Gastrocnemius medialis (tissue), 4 donors: ENCODE measurements at regions of chr9 and their contacts with region 1.

Region 1: DNA sequence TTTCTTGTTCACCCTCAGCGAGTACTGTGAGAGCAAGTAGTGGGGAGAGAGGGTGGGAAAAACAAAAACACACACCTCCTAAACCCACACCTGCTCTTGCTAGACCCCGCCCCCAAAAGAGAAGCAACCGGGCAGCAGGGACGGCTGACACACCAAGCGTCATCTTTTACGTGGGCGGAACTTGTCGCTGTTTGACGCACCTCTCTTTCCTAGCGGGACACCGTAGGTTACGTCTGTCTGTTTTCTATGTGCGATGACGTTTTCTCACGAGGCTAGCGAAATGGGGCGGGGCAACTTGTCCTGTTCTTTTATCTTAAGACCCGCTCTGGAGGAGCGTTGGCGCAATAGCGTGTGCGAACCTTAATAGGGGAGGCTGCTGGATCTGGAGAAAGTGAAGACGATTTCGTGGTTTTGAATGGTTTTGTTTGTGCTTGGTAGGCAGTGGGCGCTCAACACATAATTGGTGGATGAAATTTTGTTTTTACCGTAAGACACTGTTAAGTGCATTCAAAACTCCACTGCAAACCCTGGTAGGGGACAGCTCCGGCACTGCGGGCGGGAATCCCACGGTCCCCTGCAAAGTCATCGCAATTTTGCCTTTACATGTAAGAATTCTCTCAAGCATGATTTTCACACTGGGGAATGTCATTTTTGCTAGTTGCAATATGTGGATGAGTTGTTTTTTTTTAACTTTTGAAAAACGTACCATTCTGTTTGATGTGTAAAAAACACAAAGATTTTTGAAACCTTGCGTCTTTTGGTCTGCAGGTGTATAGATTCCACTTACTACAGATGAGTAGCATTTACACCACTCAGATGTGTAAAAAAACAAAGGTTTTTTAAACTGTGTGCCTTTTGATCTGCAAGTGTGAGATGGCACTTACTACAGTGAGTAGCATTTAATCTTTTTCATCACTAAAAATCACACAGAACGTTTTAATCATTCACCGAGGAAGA is 631 bp upstream of the C9orf72 start:
- DNase-seq: peak; percentile 98
- ATAC-seq: peak; percentile 91
- H3K4me3 ChIP-seq: peak overlapping the region; percentile 84 to 99 (median 92)
- H3K27ac ChIP-seq: peak overlapping the region; percentile 95 to 100 (median 100)
- H3K4me1 ChIP-seq: peaks cover 17 to 19% of the 10 kb centered on the region in 2 donors
- H3K27me3 ChIP-seq: no peaks in the 10 kb centered on the region
- CTCF ChIP-seq: no peak
- POLR2A ChIP-seq: peak; percentile 79 to 84

Region 2: GRCh38 chr9:26946753-26947727 is 626.9 kb before region 1 on chr9 and contains the start of gene PLAA:
- in situ Hi-C with region 1: loop called in 3 of 4 experiments (anchors 10 to 25 kb)
- intact Hi-C with region 1: loop called (anchors 10 kb)
- DNase-seq: peak; percentile 82 to 86
- ATAC-seq: peak; percentile 98 to 99
- H3K4me3 ChIP-seq: peak within 1 kb of the TSS; percentile 83 to 98 (median 95)
- H3K27ac ChIP-seq: peak within 1 kb of the TSS; percentile 86 to 99 (median 98)
- H3K4me1 ChIP-seq: peaks cover 36 to 38% of the 10 kb centered on the region in 2 donors
- H3K27me3 ChIP-seq: no peaks in the 10 kb centered on the region
- CTCF ChIP-seq: peak in 3 of 5 experiments; percentile 2 to 46 (median 41)
- POLR2A ChIP-seq: peak; percentile 65 to 79
- total RNA-seq, gene PLAA: 72.5 to 105 (median 83.8) TPM

Region 3: GRCh38 chr9:27033823-27034403 is 540.0 kb before region 1 on chr9:
- in situ Hi-C with region 1: loop called in 2 of 4 experiments (anchors 25 kb)
- intact Hi-C with region 1: no loop called
- DNase-seq: peak; percentile 4 to 23
- ATAC-seq: peak; percentile 74 to 86
- H3K4me3 ChIP-seq: no peak overlapping the region
- H3K27ac ChIP-seq: no peak overlapping the region
- H3K4me1 ChIP-seq: no peaks in the 10 kb centered on the region
- H3K27me3 ChIP-seq: no peaks in the 10 kb centered on the region
- CTCF ChIP-seq: peak; percentile 49 to 83 (median 72)
- POLR2A ChIP-seq: no peak

Region 4: DNA sequence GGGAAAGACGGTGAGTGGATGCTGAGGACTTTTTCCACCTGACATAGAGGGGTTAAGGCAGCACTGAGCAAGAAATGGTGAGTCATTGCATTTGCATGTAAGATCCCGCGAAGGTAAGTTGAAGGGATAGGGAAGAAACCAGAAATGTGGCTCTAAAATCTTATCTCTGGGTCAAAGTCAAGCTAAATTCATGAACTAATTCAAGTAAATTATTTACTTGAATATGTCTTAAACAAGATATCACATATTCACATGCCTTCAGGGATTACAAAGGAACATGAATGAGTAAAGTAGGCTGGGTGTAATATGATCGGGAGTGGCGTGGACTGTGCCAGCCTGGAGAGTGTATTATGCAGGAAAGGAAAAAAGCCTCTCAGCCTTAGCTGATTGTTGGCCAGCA is 202.5 kb before region 1 on chr9:
- in situ Hi-C with region 1: no loop called
- intact Hi-C with region 1: loop called (anchors 5 kb)
- DNase-seq: peak in 1 of 2 donors; percentile 59
- ATAC-seq: peak; percentile 79 to 84
- H3K4me3 ChIP-seq: peak overlapping the region in 1 of 4 donors; percentile 18
- H3K27ac ChIP-seq: peak overlapping the region in 3 of 4 donors; percentile 8 to 43 (median 30)
- H3K4me1 ChIP-seq: peaks cover 51 to 55% of the 10 kb centered on the region in 2 donors
- H3K27me3 ChIP-seq: no peaks in the 10 kb centered on the region
- CTCF ChIP-seq: no peak
- POLR2A ChIP-seq: no peak

Region 5: DNA sequence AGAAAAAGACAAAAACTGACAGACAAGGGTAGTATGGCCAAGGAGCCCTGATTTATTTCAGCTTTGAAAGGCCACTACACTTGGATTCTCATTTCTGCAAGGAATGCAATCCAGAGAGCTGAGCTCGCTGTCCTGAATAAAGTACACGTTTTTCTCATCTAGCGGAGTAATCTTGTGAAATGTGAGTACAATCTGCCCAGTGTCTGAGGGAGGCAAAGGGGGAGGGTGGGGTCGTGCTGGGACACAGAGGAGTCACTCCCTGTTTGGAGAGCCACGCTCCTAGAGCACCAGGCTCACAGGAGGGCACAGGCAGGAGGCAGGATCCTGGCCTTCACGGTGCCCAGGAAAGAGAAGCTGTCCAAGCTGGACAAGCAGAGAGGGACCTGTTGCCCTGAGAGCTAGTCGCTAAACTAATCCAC is 100.8 kb before region 1 on chr9:
- in situ Hi-C with region 1: loop called in 1 of 4 experiments (anchors 25 kb)
- intact Hi-C with region 1: loop called (anchors 5 kb)
- DNase-seq: peak; percentile 50 to 72
- ATAC-seq: peak; percentile 80 to 91
- H3K4me3 ChIP-seq: no peak overlapping the region
- H3K27ac ChIP-seq: peak overlapping the region; percentile 19 to 59 (median 52)
- H3K4me1 ChIP-seq: peaks cover 25 to 30% of the 10 kb centered on the region in 2 donors
- H3K27me3 ChIP-seq: no peaks in the 10 kb centered on the region
- CTCF ChIP-seq: no peak
- POLR2A ChIP-seq: no peak

Region 6: DNA sequence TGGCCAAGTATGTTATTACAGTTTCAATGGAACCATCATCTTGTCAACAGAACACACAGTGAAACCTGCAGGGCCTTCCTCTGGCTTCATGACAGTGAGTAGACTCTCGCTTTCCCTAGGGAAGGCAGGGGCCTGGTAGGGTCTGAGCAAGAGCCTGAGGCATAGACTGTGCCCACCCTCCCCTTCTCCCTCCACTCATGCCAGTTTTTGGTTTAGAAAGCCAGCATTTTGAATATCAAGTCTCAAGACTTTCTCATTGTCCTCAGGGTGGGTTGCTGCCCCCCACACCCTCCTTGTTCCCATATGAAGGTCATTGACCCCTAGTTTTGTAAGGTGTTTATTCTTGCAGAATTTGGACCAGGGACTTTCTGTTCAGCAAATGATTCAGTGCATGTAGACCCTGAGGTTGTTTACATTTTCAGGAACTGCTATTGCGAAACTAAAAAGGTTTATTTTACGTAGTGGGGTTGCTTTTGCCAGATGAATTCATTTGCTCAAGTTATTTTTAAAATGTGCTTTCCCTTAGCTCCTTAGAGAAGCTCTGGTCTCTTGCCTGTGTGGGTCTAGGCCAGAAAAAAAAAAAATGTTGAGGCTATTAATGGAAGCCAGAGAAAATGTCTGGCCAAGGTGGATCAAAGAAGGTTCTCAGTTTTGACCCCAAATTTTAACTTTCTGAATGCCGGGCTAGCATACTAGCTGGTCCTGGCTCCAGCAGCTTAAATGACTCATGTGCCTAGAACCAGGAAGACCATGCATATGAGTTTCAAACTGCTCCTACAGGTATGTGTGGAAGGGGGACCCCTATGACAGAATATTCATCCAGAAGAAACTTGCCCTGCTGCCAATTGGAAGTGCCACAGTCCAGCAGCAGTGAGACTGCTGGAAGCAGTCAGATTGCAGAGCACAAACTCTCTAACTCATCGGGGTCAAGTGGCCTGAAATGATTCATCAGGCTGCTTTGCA is 34.2 kb before region 1 on chr9:
- in situ Hi-C with region 1: no loop called
- intact Hi-C with region 1: loop called (anchors 2 kb)
- DNase-seq: peak; percentile 56 to 77
- ATAC-seq: peak; percentile 86 to 87
- H3K4me3 ChIP-seq: peak overlapping the region in 1 of 4 donors; percentile 11
- H3K27ac ChIP-seq: peak overlapping the region; percentile 86 to 92 (median 90)
- H3K4me1 ChIP-seq: peaks cover 53 to 70% of the 10 kb centered on the region in 2 donors
- H3K27me3 ChIP-seq: no peaks in the 10 kb centered on the region
- CTCF ChIP-seq: no peak
- POLR2A ChIP-seq: no peak

Region 7: DNA sequence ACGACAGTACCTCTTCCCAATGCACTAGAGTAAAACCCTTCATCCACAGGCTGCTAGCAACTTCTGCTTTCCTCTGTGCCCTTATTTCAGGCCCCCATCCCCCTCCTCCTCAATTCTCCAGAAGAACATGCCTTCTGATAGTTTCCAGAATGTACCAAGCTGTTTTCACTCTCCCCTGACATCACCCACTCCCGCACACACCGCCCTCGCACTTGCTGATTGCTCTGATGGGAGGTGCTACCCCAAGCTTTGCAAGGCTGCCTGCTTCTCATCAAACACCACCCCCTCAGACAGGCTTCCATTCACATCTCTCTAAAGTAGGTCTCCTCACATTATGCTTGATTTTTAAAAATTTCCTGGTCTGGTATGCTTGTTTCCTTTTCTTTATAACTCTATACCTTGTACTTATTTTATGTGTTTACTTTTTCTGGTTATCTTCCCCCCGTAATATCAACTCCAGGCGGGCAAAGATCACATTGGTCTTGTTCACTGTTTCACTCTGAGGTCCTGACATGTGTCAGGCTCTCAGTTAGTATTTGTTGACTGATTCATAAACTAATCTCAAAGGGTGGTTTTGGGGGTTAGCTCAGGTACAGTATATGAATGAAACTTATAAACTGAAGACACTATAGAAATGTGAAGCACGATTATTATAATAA is 90.3 kb after region 1 on chr9:
- in situ Hi-C with region 1: no loop called
- intact Hi-C with region 1: no loop called
- DNase-seq: no peak
- ATAC-seq: no peak
- H3K4me3 ChIP-seq: no peak overlapping the region
- H3K27ac ChIP-seq: no peak overlapping the region
- H3K4me1 ChIP-seq: no peaks in the 10 kb centered on the region
- H3K27me3 ChIP-seq: no peaks in the 10 kb centered on the region
- CTCF ChIP-seq: no peak
- POLR2A ChIP-seq: no peak